Activated B cell treated with CpG ODN at 0.5 μM for 24 hours (primary cell): ENCODE measurements at regions of chr14 and their contacts with region 1.

Region 1: DNA sequence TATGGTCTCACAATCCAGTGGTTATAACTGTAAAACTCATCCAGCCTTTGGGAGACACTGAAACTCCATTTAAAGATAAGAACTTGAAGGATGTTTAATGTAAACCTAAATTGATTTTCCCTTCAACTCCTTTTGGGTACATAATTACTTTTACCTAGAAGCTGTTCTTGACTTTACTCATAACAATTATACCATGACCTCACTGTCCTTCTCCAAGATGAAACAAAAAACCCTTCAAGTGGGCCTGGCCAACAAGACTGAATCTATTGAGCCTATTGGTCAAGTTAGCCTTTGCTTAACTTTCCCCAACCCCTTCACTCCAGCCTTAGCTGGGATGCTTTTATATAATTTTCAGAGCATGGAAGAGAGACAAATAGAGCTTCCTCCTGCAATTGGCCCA is 22.5 kb downstream of the PARP2 start:
- DNase-seq: no peak
- ATAC-seq: no peak
- H3K4me3 Mint-ChIP-seq: no peak overlapping the region
- H3K27ac Mint-ChIP-seq: peak overlapping the region; percentile 53
- H3K4me1 Mint-ChIP-seq: peaks cover 6% of the 10 kb centered on the region
- H3K27me3 Mint-ChIP-seq: no peaks in the 10 kb centered on the region
- CTCF ChIP-seq: no peak

Region 2: GRCh38 chr14:20019257-20019865 is 346.6 kb before region 1 on chr14 and contains the start of gene OR4K14:
- CTCF ChIA-PET with region 1: no interaction called
- POLR2A ChIA-PET with region 1: no interaction called
- intact Hi-C with region 1: no loop called
- DNase-seq: no peak
- ATAC-seq: no peak
- H3K4me3 Mint-ChIP-seq: no peak within 1 kb of the TSS
- H3K27ac Mint-ChIP-seq: no peak within 1 kb of the TSS
- H3K4me1 Mint-ChIP-seq: no peaks in the 10 kb centered on the region
- H3K27me3 Mint-ChIP-seq: no peaks in the 10 kb centered on the region
- CTCF ChIP-seq: no peak
- total RNA-seq, gene OR4K14: not detected in 2 replicates

Region 3: DNA sequence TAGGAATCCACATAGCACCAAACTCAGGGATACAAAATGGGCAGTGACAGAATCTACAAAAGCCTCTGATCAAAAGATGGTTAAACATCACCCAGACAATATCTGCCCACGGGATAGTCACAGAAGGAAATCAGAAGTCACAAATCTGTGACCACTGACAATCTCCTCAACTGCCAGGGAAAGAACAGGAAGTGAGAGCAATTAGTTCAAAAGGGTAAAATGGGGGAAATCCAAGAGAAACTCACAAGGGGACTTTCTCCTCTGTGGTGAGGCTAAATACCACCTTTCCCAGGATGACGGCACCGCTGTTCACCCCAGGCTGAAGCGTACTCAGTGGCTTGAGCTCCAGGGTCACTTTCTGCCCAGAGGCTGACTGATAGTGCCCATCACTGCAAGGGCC is 70.9 kb before region 1 on chr14:
- CTCF ChIA-PET with region 1: no interaction called
- POLR2A ChIA-PET with region 1: no interaction called
- intact Hi-C with region 1: loop called (anchors 1 kb)
- DNase-seq: no peak
- ATAC-seq: peak; percentile 81
- H3K4me3 Mint-ChIP-seq: no peak overlapping the region
- H3K27ac Mint-ChIP-seq: peak overlapping the region; percentile 50
- H3K4me1 Mint-ChIP-seq: peaks cover 26% of the 10 kb centered on the region
- H3K27me3 Mint-ChIP-seq: no peaks in the 10 kb centered on the region
- CTCF ChIP-seq: no peak

Region 4: GRCh38 chr14:20332788-20333493 is 33.0 kb before region 1 on chr14 and contains the start of gene CCNB1IP1:
- CTCF ChIA-PET with region 1: no interaction called
- POLR2A ChIA-PET with region 1: no interaction called
- intact Hi-C with region 1: loop called (anchors 2 kb)
- DNase-seq: no peak
- ATAC-seq: peak; percentile 97
- H3K4me3 Mint-ChIP-seq: peak within 1 kb of the TSS; percentile 99
- H3K27ac Mint-ChIP-seq: peak within 1 kb of the TSS; percentile 89
- H3K4me1 Mint-ChIP-seq: peaks cover 29% of the 10 kb centered on the region
- H3K27me3 Mint-ChIP-seq: no peaks in the 10 kb centered on the region
- CTCF ChIP-seq: no peak
- total RNA-seq, gene CCNB1IP1: 34.0 and 35.3 TPM in 2 replicates

Region 5: GRCh38 chr14:20350860-20351259 is 15.1 kb before region 1 on chr14:
- CTCF ChIA-PET with region 1: no interaction called
- POLR2A ChIA-PET with region 1: no interaction called
- intact Hi-C with region 1: loop called (anchors 2 kb)
- DNase-seq: no peak
- ATAC-seq: no peak
- H3K4me3 Mint-ChIP-seq: no peak overlapping the region
- H3K27ac Mint-ChIP-seq: no peak overlapping the region
- H3K4me1 Mint-ChIP-seq: no peaks in the 10 kb centered on the region
- H3K27me3 Mint-ChIP-seq: no peaks in the 10 kb centered on the region
- CTCF ChIP-seq: no peak

Region 6: DNA sequence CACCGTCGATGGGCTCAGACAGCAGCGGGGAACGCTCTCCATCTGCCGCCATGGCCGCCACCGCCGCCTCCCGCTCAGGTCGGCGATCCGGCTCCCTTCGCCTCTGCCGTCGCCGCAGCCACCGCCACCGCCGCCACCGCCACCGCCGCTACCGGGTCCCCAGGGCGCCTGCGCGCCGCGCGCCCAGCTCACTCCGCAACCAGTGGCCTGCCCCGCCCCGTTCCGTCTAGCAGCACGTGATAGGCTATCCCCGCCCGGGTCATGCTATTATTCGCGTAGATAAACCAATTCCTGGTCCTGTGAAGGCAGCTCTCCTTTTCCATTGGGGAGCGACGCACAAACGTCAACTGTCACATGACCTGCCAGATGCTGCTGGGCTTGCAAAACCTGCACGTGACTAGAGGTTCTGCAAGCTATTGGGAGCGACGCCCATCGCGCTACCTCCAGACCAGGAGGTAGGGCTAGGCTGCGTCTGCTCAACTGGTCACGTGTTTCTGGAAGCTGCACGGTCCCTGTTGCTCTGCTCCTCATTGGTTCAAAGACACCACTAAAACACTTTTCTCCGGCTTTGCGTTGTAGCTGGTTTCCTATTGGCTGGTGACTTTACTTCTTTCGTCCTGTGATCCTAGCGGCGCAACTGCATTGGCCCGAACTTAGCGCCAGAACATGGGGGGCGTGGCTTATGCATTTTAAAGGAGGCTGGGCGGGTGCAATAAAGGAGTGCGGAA is 95.5 kb after region 1 on chr14 and contains the start of gene PIP4P1:
- CTCF ChIA-PET with region 1: no interaction called
- POLR2A ChIA-PET with region 1: no interaction called
- intact Hi-C with region 1: no loop called
- DNase-seq: peak; percentile 94
- ATAC-seq: peak; percentile 86
- H3K4me3 Mint-ChIP-seq: peak within 1 kb of the TSS; percentile 91
- H3K27ac Mint-ChIP-seq: peak within 1 kb of the TSS; percentile 96
- H3K4me1 Mint-ChIP-seq: peaks cover 55% of the 10 kb centered on the region
- H3K27me3 Mint-ChIP-seq: no peaks in the 10 kb centered on the region
- CTCF ChIP-seq: no peak
- total RNA-seq, gene PIP4P1: 84.8 and 87.3 TPM in 2 replicates